Aorta (tissue), 5 donors: ENCODE measurements at regions of chr16 and their contacts with region 1.

Region 1: GRCh38 chr16:47523342-47524006 is 62.3 kb downstream of the PHKB start:
- DNase-seq: no peak
- ATAC-seq: no peak
- H3K4me3 ChIP-seq: no peak overlapping the region
- H3K27ac ChIP-seq: no peak overlapping the region
- H3K4me1 ChIP-seq: peaks cover 0 to 2% of the 10 kb centered on the region in 2 donors
- H3K27me3 ChIP-seq: no peaks in the 10 kb centered on the region

Region 2: GRCh38 chr16:47483616-47484015 is 39.9 kb before region 1 on chr16:
- intact Hi-C with region 1: loop called in 1 of 2 experiments (anchors 2 kb)
- DNase-seq: no peak
- ATAC-seq: no peak
- H3K4me3 ChIP-seq: no peak overlapping the region
- H3K27ac ChIP-seq: no peak overlapping the region
- H3K4me1 ChIP-seq: peaks cover 0 to 8% of the 10 kb centered on the region in 2 donors
- H3K27me3 ChIP-seq: no peaks in the 10 kb centered on the region

Region 3: DNA sequence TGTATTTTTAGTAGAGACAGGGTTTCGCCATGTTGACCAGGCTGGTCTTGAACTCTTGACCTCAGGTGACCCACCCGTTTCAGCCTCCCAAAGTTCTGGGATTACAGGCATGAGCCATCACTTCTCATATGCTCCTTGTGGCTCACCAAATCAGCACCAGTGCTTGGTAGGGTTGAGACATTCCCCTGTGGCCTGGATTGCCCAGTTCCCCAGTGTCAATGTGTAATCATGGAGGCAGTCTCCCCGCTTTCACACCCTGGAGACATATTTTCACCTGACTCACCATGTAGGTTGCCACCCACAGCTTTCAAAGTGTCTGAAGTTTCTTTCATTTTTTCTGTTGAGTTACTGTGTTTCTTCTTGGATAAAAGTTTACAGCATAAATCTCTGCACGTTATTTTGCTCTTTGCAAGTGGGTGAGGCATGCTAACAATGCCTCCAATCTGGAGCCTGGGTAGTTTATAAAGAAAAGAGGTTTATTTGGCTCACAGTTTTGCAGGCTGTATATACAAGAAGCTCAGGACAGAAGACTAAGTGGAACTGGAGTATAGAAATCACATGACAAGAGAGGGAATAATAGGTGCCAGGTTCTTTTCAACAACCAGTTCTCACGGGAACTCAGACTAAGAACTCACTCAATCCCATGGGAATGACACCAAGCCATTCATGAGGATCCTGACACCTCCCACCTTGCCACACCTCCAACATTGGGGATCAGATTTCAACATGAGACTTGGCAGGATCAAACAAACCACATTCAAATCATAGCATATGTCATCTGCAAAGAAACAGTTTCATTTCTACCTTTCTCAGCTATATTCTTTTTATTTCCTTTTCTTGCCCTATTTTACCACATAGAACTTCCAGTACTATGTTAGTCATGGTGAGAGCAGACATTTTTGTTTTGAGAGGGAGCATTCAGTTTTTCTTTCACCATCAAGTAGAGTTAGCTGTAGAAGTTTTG is 50.9 kb after region 1 on chr16:
- intact Hi-C with region 1: no loop called
- DNase-seq: no peak
- ATAC-seq: no peak
- H3K4me3 ChIP-seq: no peak overlapping the region
- H3K27ac ChIP-seq: no peak overlapping the region
- H3K4me1 ChIP-seq: no peaks in the 10 kb centered on the region
- H3K27me3 ChIP-seq: no peaks in the 10 kb centered on the region